Dendritic cell treated with granulocyte-macrophage colony-stimulating factor and Interleukin-4, amounts not matched to agents 40 ng/mL and 50 ng/mL, for 4 days (primary cell): ENCODE measurements at regions of chr2 and their contacts with region 1.

Region 1: DNA sequence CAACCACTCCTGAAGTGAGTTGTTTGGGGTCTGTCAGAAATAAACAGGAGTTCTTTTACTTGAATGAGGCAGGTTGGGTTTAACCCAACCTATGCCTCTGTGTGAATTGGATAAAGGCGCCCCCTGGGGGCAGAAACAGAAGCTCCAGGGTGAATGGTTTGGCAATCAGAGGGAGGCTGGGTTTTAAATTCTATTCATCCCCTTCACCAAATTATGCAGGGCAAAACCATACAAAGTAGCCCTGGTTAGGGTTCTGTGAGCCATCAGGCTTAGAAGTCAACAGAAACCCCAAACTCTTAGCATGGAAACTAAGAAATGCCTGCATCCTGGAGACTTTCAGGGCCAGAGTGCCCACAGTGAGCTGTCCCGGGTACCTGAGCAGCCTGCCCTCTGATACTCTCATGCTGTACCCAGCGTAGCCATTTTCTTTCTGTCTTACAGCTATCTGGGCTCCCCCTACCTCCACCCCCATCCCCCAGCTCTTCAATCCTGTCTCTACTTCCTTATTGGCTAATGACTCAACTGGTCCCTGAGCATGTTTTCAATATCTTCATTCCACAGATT is 241.5 kb downstream of the ICOS start:
- H3K4me3 Mint-ChIP-seq: no peak overlapping the region
- H3K27ac Mint-ChIP-seq: no peak overlapping the region
- H3K4me1 Mint-ChIP-seq: no peaks in the 10 kb centered on the region
- H3K27me3 Mint-ChIP-seq: peaks cover 5% of the 10 kb centered on the region

Region 2: GRCh38 chr2:203928849-203929248 is 249.2 kb before region 1 on chr2:
- intact Hi-C with region 1: loop called (anchors 2 kb)
- H3K4me3 Mint-ChIP-seq: no peak overlapping the region
- H3K27ac Mint-ChIP-seq: no peak overlapping the region
- H3K4me1 Mint-ChIP-seq: no peaks in the 10 kb centered on the region
- H3K27me3 Mint-ChIP-seq: no peaks in the 10 kb centered on the region

Region 3: DNA sequence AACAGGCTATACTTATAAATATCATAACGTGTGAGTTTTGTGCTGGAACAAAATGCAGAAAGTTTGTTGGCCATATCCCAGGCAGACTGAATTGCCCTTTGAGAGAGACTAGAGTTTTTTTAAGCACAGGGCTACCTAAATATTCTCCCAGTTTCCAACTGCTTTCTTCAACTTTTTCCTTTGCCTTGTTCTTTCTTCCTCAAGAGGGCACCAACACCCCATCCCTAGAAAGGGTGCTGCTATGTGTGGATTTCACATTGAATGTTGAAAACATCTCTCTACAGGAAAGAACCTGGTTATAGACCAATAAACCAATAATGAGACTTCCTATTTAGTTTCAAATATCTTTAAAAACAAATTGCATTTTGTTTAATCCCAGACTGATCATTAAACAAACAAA is 153.6 kb before region 1 on chr2:
- intact Hi-C with region 1: loop called (anchors 1 kb)
- H3K4me3 Mint-ChIP-seq: no peak overlapping the region
- H3K27ac Mint-ChIP-seq: no peak overlapping the region
- H3K4me1 Mint-ChIP-seq: no peaks in the 10 kb centered on the region
- H3K27me3 Mint-ChIP-seq: peaks cover 5% of the 10 kb centered on the region

Region 4: DNA sequence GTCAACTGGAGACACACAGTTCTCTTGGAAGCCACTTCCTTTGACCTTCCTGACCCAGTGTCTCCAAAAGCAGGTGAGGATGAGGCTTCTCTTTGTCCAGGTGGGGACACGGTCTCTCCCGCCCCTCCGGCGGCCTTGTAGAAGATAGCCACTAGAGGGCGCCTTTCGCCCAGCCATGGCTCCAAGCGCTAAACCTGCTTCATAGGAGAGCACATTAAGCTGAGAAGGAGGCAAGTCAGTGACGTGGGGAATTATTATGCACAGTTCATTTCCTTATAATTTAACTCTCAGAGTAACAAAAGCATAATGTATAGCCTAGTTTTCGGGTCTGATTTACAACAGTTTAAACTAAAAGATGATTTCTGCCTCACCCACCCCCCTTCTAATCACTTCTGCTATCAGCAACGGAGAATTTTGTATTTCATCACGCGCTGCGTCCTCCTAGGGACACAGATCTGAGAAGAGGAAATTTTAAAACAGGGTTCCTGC is 32.8 kb before region 1 on chr2:
- intact Hi-C with region 1: loop called (anchors 1 kb)
- H3K4me3 Mint-ChIP-seq: peak overlapping the region; percentile 57
- H3K27ac Mint-ChIP-seq: no peak overlapping the region
- H3K4me1 Mint-ChIP-seq: peaks cover 7% of the 10 kb centered on the region
- H3K27me3 Mint-ChIP-seq: peaks cover 9% of the 10 kb centered on the region

Region 5: GRCh38 chr2:204228169-204228886 is 50.3 kb after region 1 on chr2:
- intact Hi-C with region 1: no loop called
- H3K4me3 Mint-ChIP-seq: no peak overlapping the region
- H3K27ac Mint-ChIP-seq: no peak overlapping the region
- H3K4me1 Mint-ChIP-seq: no peaks in the 10 kb centered on the region
- H3K27me3 Mint-ChIP-seq: peaks cover 2% of the 10 kb centered on the region